ENCODE measurements at regions of chr3 and their contacts with region 1.

Region 1: DNA sequence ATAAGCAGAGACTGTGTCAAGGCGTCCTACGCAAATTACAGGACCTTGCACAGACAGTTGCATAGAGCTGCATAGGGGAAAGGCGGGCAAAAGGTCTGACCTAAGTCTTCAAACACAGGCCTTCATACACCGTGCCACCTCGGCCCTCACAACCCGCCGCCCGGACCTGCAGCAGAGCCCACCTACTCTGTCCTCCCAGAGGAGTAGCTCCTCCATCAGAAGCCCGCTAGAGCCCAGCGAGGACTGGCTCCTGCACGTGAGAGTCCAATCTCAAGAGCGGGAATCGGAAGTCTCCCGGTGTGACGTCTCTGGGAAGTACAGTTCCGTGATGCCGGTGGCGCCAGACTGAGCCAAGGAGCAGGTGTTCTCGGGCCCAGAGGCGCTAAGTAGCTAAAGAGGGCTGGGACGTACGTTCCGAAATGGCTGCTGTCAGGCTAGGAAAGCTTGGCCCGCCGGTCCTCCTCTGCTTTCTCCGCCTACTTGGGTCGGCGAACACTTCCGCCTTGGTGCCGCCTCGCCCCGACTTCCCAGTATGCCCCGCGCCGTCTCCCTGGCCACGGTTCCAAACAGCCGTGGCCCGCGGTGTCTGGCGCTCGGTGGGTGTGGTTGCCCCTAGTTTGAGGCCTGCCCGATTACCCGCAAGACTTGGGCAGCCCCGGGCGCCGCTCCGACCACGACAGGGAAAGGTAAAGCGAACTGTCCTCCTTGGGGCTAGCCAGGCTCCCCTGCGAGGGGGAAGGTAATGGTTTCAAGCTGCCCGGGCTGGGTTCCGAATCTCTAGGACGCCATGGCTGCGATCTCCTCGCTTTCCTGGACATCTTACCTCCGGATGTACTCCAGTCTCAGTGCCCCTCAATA is at the starts of genes ASTE1 and NEK11:
- DNase-seq: peak; percentile 97
- H3K4me3 Mint-ChIP-seq: peak within 1 kb of the TSS; percentile 86
- H3K27ac Mint-ChIP-seq: peak within 1 kb of the TSS; percentile 97
- H3K4me1 Mint-ChIP-seq: peaks cover 29% of the 10 kb centered on the region
- H3K27me3 Mint-ChIP-seq: peaks cover 10% of the 10 kb centered on the region
- total RNA-seq, gene ASTE1: 8.7 and 9.5 TPM in 2 replicates
- total RNA-seq, gene NEK11: 1.1 and 1.5 TPM in 2 replicates

Region 2: DNA sequence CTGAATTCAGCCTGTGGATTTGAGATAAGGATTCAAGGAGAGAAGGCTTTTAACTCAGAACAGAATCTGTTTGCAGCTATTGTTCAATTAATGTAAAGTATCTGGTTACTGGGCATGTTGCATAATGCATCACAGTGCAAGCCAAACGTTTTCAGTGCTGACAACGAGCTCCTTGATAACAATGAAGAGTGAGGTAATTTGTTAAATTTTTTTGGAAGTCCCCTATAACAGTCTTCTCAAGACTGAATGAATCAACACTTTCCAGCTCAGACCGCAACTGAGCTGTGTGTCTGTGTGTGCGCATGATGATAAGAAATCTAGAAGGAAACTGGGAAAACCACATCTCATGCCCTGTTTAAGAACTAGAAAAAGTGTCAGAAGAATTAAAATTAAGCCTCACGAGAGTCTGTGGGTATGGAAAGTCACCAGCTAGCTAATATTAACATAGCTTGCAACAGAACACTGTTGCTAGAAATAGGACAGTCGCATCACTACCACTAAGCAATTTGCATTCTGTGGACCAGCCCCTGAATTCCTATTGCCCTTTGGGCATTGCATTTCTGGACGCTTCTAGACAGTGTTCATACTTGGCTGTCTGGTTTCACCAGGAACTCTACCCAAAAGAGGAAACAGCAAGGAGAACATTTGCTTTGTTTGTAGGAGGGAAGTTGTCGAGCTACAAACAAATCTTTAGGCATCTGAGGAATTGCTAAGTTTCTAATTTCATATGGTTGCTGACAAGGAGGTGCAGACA is 176.3 kb before region 1 on chr3:
- intact Hi-C with region 1: loop called (anchors 2 kb)
- DNase-seq: peak; percentile 87
- H3K4me3 Mint-ChIP-seq: peak overlapping the region; percentile 64
- H3K27ac Mint-ChIP-seq: peak overlapping the region; percentile 75
- H3K4me1 Mint-ChIP-seq: peaks cover 26% of the 10 kb centered on the region
- H3K27me3 Mint-ChIP-seq: peaks cover 34% of the 10 kb centered on the region

Region 3: DNA sequence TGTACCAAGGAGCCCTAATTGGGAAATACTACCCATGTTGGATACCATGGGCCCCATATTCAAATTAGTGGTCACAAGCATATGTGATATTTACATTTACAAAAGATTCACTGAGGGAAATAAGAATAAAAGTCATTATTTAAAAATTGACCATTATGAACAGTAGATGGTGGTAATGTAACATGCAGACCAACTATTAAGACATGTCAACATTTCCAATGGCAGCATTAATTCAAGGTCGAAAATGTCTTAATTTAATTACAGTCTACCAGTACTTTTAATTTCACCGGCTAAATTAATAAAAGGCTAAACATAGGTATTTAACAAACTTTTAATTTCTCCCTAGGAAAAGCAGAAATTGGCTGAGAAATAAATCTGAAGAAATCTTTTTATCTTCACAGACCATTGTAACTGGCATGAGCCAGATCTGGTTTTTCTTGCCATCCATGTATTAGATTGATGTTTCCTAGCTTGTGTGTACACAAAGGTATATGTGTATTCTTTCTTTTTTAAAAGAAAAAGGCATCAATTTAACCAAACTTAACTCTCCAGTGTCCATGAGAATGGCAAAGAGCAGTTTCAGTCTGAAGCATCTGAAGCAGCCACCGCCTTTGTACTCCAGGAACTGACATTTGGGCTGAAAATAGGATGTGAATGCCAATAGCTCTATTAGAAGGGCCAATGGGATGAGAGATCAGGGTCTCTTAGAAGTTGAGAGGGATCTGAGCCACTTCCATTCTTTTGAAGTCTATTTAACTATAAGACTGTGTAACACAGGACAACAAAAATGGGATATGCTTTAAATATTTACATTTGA is 26.7 kb after region 1 on chr3:
- intact Hi-C with region 1: no loop called
- DNase-seq: no peak
- H3K4me3 Mint-ChIP-seq: no peak overlapping the region
- H3K27ac Mint-ChIP-seq: no peak overlapping the region
- H3K4me1 Mint-ChIP-seq: no peaks in the 10 kb centered on the region
- H3K27me3 Mint-ChIP-seq: peaks cover 1% of the 10 kb centered on the region

Region 4: DNA sequence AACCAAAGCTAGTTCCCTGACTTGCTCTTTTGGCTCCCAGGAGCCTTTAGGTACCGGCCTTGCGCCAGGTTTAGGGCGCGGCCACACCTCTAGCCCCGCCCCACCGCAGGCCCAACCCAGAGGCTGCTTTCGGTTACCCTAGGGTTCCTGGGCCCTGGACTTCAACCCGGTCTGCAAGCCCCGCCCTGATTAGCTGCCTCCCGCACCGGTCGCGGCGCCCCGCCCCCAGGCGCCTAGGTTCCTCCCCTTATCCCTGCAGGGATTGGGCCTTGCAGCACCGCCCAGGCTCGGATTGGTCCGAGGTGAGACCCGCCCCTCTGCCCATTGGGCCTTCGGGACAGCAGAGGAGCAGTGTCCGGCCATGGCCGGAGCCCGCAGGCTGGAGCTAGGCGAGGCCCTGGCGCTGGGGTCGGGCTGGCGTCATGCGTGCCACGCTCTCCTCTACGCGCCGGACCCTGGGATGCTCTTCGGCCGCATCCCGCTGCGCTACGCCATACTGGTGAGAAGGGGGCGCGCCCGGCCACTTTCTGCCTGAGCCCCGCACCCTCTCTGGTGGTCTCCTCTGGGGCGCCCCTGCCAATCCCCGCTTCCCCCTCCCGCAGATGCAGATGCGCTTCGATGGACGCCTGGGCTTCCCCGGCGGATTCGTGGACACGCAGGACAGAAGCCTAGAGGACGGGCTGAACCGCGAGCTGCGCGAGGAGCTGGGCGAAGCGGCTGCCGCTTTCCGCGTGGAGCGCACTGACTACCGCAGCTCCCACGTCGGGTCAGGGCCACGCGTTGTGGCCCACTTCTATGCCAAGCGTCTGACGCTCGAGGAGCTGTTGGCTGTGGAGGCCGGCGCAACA is 355.1 kb after region 1 on chr3 and contains the start of gene NUDT16:
- intact Hi-C with region 1: loop called (anchors 5 kb)
- DNase-seq: peak; percentile 100
- H3K4me3 Mint-ChIP-seq: peak within 1 kb of the TSS; percentile 95
- H3K27ac Mint-ChIP-seq: peak within 1 kb of the TSS; percentile 95
- H3K4me1 Mint-ChIP-seq: peaks cover 38% of the 10 kb centered on the region
- H3K27me3 Mint-ChIP-seq: no peaks in the 10 kb centered on the region
- total RNA-seq, gene NUDT16: 8.4 TPM in 2 replicates

Region 5: GRCh38 chr3:132416807-132417694 is 1390.5 kb after region 1 on chr3 and contains the start of gene DNAJC13:
- intact Hi-C with region 1: loop called (anchors 1 kb)
- DNase-seq: peak; percentile 97
- H3K4me3 Mint-ChIP-seq: peak within 1 kb of the TSS; percentile 98
- H3K27ac Mint-ChIP-seq: peak within 1 kb of the TSS; percentile 95
- H3K4me1 Mint-ChIP-seq: peaks cover 25% of the 10 kb centered on the region
- H3K27me3 Mint-ChIP-seq: peaks cover 3% of the 10 kb centered on the region
- total RNA-seq, gene DNAJC13: 33.6 and 34.0 TPM in 2 replicates

Measured in activated CD4-positive, alpha-beta T cell treated with anti-CD3 and anti-CD28 coated beads, Interleukin-2, amount 10 ng/mL, durations not matched to agents 24 days and 14 days (primary cell).